Heart right ventricle (tissue), 16 donors: ENCODE measurements at regions of chr6 and their contacts with region 1.

Region 1: GRCh38 chr6:97497713-97498331 is 214.8 kb upstream of the MMS22L start:
- DNase-seq: peak; percentile 39 to 58
- ATAC-seq: peak in 7 of 8 donors; percentile 64 to 94 (median 83)
- H3K4me3 ChIP-seq: no peak overlapping the region
- H3K27ac ChIP-seq: no peak overlapping the region
- H3K4me1 ChIP-seq: no peaks in the 10 kb centered on the region
- H3K27me3 ChIP-seq: peaks cover 0 to 8% (median 0%) of the 10 kb centered on the region in 7 donors
- CTCF ChIP-seq: peak; percentile 43 to 86 (median 79)

Region 2: DNA sequence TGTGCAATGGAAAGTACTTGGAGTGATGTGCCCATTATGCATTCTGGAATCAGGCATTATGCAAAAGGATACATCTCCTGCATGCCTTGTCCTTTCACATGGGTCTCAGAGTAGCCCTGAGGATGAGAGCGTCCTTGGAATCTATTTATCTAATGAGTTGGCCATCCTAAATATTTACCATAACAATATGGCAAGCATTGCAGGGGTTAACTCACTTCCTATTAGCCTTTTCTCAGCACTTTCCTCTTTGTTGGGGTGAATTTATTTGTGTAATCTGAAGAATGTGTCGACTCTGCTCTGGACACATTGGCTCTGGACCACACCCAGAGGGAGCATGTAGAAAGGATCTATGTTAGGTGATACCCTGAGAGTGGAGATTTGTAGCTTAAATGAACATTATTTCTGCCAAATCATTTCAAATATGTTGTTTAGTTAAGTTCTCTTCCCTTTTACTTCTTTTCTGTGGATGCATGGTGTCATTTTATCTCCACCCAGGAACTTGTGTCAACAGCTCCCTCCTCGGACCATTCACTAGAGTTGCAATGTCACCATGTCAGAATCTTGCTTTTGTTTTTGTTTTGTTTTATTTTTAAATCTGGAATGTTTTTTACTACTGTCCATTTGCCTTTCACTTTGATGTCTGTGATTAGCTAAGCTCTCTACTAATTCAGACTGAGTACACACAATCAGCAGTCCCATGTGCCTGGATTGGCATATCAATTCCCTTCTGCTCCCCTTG is 542.2 kb after region 1 on chr6:
- intact Hi-C with region 1: loop called in 4 of 10 experiments (anchors 5 to 10 kb)
- DNase-seq: no peak
- ATAC-seq: no peak
- H3K4me3 ChIP-seq: no peak overlapping the region
- H3K27ac ChIP-seq: no peak overlapping the region
- H3K4me1 ChIP-seq: peaks cover 0 to 3% (median 0%) of the 10 kb centered on the region in 9 donors
- H3K27me3 ChIP-seq: peaks cover 0 to 39% (median 8%) of the 10 kb centered on the region in 7 donors
- CTCF ChIP-seq: peak in 6 of 9 donors; percentile 21 to 55 (median 46)

Region 3: DNA sequence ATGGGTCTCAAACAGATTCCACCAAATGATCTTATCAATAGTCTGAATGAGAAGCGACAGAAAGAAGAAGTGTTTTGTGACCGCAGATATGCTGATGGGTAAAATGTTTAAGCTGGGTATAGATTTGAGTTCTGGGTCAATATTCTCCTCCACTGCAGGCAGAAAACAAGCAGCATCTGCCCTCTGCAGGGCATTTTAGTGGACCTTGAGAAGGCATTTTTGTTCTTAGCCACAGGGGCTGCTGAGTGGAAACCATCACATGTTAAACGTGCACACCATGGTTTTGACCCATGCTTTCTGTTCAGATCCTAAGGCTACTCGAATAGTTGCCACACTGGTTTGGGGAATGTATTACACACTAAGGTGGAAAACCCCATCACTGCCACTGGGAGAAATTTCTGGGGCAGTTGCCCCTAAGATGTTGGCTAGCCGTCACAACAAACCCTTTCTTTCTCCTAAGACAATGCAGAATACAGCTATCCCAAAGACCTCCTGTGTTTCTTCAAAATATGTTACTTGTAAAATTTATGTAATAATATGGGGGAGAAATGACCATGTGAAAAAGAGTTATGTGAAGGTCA is 1342.0 kb after region 1 on chr6:
- intact Hi-C with region 1: loop called in 7 of 10 experiments (anchors 5 to 10 kb)
- DNase-seq: no peak
- ATAC-seq: no peak
- H3K4me3 ChIP-seq: no peak overlapping the region
- H3K27ac ChIP-seq: no peak overlapping the region
- H3K4me1 ChIP-seq: peaks cover under 1 to 32% (median 26%) of the 10 kb centered on the region in 9 donors
- H3K27me3 ChIP-seq: peaks cover 55 to 100% (median 99%) of the 10 kb centered on the region in 7 donors
- CTCF ChIP-seq: no peak

Region 4: GRCh38 chr6:98845211-98846020 is 1347.6 kb after region 1 on chr6:
- intact Hi-C with region 1: loop called in 7 of 10 experiments (anchors 5 to 10 kb)
- DNase-seq: peak; percentile 63 to 66
- ATAC-seq: peak; percentile 20 to 87 (median 72)
- H3K4me3 ChIP-seq: peak overlapping the region in 7 of 10 donors; percentile 6 to 43 (median 30)
- H3K27ac ChIP-seq: no peak overlapping the region
- H3K4me1 ChIP-seq: peaks cover 4 to 42% (median 34%) of the 10 kb centered on the region in 9 donors
- H3K27me3 ChIP-seq: peaks cover 27 to 99% (median 90%) of the 10 kb centered on the region in 7 donors
- CTCF ChIP-seq: peak; percentile 61 to 85 (median 80)

Region 5: DNA sequence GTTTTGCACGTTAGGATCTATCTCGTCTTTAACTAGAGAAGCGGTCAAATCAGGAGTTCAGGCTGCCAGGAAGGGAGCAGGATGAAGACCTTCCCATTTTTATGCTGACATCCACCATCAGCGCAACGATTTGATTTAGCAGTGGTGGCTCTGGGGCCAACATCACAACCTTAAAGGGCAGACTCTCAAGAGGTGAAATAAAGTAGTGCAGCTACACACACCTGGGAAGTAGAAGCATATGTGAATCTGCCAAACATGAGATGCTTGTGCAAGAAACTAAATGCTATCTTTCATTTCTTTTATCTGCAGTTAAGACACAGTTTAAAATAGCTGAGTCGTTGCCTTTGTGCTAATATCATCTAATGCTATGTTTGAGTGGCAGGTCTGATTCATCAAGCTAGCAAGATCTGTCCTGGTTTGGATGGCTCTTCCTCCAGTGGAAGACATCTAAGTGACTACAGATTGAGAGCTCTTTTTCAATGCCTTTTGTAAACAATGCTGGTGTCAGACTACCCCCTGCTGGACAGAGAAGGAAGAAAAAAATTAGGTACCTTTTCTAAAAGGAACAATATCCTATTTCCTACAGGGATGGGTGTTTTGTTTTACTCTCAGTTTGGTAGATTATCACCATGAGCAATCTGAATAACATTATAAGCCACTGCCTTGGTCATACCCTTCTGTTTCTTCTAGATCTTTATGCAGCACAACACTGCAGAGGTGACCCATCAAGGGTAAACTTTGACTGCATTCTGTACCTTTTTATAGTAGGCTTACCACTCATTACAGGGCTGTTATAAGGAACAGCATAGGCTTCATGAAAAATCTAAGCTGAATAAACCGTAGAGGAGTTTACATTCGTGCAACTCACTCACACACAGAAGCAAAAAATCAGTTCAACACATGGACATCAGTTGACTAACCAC is 1621.5 kb after region 1 on chr6:
- intact Hi-C with region 1: loop called in 6 of 10 experiments (anchors 5 to 10 kb)
- DNase-seq: no peak
- ATAC-seq: peak in 1 of 8 donors; percentile 62
- H3K4me3 ChIP-seq: no peak overlapping the region
- H3K27ac ChIP-seq: no peak overlapping the region
- H3K4me1 ChIP-seq: no peaks in the 10 kb centered on the region
- H3K27me3 ChIP-seq: peaks cover 0 to 45% (median 19%) of the 10 kb centered on the region in 7 donors
- CTCF ChIP-seq: peak; percentile 47 to 69 (median 64)